Activated CD8-positive, alpha-beta T cell treated with anti-CD3 and anti-CD28 coated beads, Interleukin-2, amount 10 ng/mL, durations not matched to agents 7 days and 5 days (primary cell): ENCODE measurements at regions of chr9 and their contacts with region 1.

Region 1: GRCh38 chr9:96566498-96567207 is 53.0 kb downstream of the CDC14B start:
- DNase-seq: peak; percentile 79
- ATAC-seq: peak; percentile 89
- H3K4me3 Mint-ChIP-seq: peak overlapping the region; percentile 74
- H3K27ac Mint-ChIP-seq: no peak overlapping the region
- H3K4me1 Mint-ChIP-seq: peaks cover 16% of the 10 kb centered on the region
- H3K27me3 Mint-ChIP-seq: peaks cover 23% of the 10 kb centered on the region

Region 2: GRCh38 chr9:96441798-96442445 is 124.7 kb before region 1 on chr9:
- CTCF ChIA-PET with region 1: interaction called, 13 read pairs
- POLR2A ChIA-PET with region 1: no interaction called
- DNase-seq: peak; percentile 43
- ATAC-seq: peak; percentile 39
- H3K4me3 Mint-ChIP-seq: no peak overlapping the region
- H3K27ac Mint-ChIP-seq: no peak overlapping the region
- H3K4me1 Mint-ChIP-seq: no peaks in the 10 kb centered on the region
- H3K27me3 Mint-ChIP-seq: peaks cover under 1% of the 10 kb centered on the region

Region 3: GRCh38 chr9:96555567-96556386 is 10.9 kb before region 1 on chr9:
- CTCF ChIA-PET with region 1: interaction called, 17 read pairs
- POLR2A ChIA-PET with region 1: no interaction called
- DNase-seq: no peak
- ATAC-seq: no peak
- H3K4me3 Mint-ChIP-seq: no peak overlapping the region
- H3K27ac Mint-ChIP-seq: no peak overlapping the region
- H3K4me1 Mint-ChIP-seq: no peaks in the 10 kb centered on the region
- H3K27me3 Mint-ChIP-seq: peaks cover 12% of the 10 kb centered on the region

Region 4: DNA sequence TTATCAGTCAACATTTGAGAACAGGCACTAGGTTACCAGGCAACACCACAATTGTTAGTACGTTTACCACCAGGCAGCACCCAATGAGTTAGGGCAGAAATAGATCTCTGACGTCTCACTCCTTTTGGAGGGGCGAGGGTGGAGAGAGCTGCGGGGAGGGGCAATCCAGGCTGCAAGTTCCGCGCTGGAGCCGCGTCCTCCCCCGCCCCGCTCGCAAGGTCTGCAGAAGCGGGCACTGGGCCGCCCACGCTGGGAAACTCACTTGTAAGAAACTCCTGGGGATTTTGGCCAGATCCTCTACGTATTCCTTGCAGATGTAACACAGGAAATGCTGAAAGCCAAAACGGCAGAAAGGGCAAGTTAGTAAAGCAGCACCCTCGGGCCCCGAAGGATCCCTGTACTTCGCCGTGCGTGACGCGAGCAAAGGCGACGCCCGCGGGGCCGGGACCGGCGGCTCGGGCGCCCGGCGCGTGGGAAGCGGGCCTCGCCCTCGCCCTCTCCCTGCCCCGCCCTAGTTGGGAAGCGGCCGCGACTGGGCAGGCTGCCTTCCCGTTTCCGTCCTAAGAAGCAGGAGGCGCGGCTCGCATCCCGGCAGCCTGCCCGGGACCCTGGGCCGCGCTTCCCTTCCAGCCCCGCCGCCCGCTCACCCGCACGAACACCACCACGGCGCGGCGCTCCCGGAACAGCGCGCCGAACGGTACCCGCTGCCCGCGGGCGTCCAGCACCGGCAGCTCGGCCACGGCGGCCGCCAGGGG is 88.0 kb after region 1 on chr9:
- CTCF ChIA-PET with region 1: no interaction called
- POLR2A ChIA-PET with region 1: no interaction called
- DNase-seq: peak; percentile 68
- ATAC-seq: peak; percentile 76
- H3K4me3 Mint-ChIP-seq: peak overlapping the region; percentile 81
- H3K27ac Mint-ChIP-seq: peak overlapping the region; percentile 79
- H3K4me1 Mint-ChIP-seq: peaks cover 13% of the 10 kb centered on the region
- H3K27me3 Mint-ChIP-seq: peaks cover 18% of the 10 kb centered on the region